Dorsolateral prefrontal cortex (tissue), 120 donors: ENCODE measurements at regions of chr17 and their contacts with region 1.

Region 1: GRCh38 chr17:82668631-82669099 is 20.4 kb upstream of the WDR45B start:
- DNase-seq: peak; percentile 50 to 85 (median 74)
- H3K4me3 ChIP-seq: peak overlapping the region in 43 of 59 donors; percentile 2 to 51 (median 27)
- H3K27ac ChIP-seq: peak overlapping the region; percentile 20 to 93 (median 82)
- H3K27me3 ChIP-seq: no peaks in the 10 kb centered on the region
- CTCF ChIP-seq: peak in 54 of 56 donors; percentile 43 to 89 (median 72)

Region 2: DNA sequence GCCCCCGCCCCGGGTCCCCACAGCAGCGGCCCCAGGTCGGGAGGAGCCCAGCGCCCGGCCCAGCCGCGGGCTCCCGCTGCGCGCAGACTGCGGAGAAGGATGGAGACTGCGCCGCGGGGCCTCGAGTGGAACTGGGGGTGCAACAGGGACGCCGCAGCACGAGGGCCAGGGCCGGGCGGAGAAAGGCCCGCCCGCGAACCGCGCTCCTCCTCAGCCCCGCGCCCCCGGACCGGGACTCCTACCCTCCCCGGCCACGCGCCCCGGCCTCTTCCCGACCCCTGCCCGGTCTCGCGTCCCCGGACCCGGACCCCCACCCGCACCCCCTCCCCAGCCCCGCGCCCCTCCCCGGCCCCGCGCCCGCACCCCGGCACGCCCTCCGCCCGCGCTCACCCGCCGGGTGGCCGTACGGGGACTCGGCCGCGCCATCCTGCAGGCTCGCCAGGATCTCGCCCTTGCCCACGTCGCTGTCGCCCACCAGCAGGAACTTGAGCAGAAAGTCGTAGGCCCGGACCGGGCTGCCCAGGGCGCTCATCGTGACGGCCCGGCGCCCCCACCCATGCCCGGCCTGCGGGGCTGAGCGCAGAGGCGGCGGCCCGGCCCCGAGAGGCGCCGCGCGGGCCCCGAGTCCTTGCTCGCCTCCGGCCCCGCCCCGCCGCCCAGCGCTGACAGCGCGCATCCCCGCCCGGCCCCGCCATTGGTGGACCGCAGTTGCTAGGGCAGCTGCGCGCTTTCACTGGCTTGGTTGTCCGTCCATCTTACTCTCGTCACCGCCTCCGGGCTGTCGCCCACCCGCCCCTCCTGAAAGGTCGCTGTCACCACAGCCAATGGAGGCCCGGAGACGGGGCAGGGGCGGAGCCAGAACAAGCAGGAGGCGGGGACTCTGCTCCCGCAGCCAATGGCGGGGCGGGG is 29.7 kb after region 1 on chr17 and contains the start of gene RAB40B:
- intact Hi-C with region 1: loop called (anchors 2 to 5 kb)
- DNase-seq: peak; percentile 99 to 100 (median 100)
- H3K4me3 ChIP-seq: peak within 1 kb of the TSS; percentile 60 to 96 (median 87)
- H3K27ac ChIP-seq: peak within 1 kb of the TSS in 58 of 59 donors; percentile 51 to 97 (median 86)
- H3K27me3 ChIP-seq: no peaks in the 10 kb centered on the region
- CTCF ChIP-seq: peak in 7 of 56 donors; percentile 1 to 22 (median 10)
- total RNA-seq, gene RAB40B: 61.9 to 320 (median 103) TPM

Region 3: DNA sequence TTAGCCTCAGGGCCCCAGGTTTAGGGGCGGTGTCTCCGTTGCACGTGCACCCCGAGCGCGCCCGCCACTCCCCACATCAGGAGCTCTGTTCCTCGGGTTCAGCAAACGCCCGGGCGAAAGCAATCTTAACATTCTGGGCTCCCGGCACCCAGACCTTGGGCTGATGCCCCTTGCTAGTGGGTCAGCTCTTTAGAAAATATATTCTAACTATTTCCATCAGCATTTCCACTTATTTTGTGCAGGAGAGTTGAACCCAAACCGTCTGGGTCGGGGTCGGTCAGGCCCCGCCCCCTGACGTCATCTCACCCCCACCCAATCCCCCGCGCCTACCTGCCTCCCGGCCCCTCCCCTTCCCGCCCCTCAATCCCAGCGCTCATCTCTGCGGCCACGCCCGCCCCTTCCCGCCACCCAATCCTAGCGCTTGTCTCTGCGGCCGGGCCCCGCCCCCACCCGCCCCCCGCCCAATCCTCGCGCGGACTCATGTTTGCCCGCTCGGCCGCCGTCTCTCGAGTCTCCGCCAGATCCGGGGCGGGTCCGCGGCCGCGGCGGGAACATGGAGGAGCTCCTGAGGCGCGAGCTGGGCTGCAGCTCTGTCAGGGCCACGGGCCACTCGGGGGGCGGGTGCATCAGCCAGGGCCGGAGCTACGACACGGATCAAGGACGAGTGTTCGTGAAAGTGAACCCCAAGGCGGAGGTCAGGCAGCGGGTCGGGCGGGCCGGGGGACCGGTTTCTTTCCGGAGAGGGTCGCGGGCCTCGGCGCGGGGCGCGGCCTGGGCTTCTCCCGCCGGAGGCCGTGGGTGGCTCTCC is 47.7 kb after region 1 on chr17 and contains the start of gene FN3KRP:
- intact Hi-C with region 1: loop called in 1 of 2 experiments (anchors 2 kb)
- DNase-seq: peak; percentile 78 to 95 (median 91)
- H3K4me3 ChIP-seq: peak within 1 kb of the TSS; percentile 69 to 98 (median 92)
- H3K27ac ChIP-seq: peak within 1 kb of the TSS in 47 of 59 donors; percentile 17 to 89 (median 72)
- H3K27me3 ChIP-seq: no peaks in the 10 kb centered on the region
- CTCF ChIP-seq: peak in 6 of 56 donors; percentile 7 to 19 (median 14)
- total RNA-seq, gene FN3KRP: 32.3 to 70.7 (median 49.0) TPM

Region 4: GRCh38 chr17:82767041-82767754 is 98.5 kb after region 1 on chr17:
- intact Hi-C with region 1: loop called (anchors 2 kb)
- DNase-seq: peak in 6 of 10 donors; percentile 7 to 77 (median 57)
- H3K4me3 ChIP-seq: no peak overlapping the region
- H3K27ac ChIP-seq: peak overlapping the region in 22 of 59 donors; percentile 6 to 63 (median 46)
- H3K27me3 ChIP-seq: no peaks in the 10 kb centered on the region
- CTCF ChIP-seq: peak; percentile 23 to 86 (median 72)